Caco-2 (cell line): ENCODE measurements at regions of chr19 and their contacts with region 1.

Region 1: DNA sequence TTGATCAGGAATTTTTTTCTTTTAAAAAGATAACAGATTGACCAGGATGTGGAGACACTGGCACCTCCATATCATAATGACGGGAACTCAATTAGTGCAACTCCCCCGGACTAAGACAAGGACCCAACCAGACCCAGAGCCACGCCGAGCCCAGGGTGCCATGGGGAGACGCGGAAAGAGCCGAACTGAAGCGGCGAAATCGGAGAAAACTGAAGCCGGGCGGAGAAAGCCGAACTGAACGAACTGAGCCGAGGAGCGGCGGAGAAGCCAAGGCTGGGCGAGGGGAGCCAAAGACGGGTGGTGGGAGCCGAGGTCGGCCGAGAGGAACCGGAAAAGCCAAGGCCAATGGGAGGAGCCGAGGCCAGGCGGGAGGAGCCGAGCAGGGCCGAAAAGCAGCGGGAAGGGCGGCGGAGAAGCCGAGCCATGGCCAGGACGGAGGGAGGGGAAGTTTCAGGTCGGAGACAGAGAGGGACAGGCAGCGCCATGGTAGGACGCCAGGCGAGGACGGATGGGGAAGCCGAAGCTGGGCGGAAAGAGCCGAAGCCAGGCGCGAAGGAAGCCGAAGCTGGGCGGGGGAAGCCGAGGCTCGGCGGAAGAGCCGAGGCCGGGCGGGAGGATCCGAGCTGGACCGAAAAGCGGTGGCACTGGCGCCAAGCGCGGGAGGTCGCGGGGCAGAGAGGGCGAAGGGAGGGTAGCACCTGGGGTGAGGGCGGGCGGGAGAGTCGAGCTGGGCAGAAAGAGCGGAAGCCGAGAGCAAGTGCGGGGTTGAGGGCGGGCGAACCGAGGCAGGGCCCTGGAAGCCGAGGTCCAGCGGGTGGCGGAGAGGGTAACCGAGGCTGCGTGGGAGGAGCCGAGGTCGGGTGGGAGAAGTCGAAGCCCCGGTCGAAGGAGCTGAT is 29.4 kb downstream of the ZNF557 start:
- DNase-seq: peak; percentile 94
- H3K4me3 ChIP-seq: peak overlapping the region; percentile 82
- H3K4me3 Mint-ChIP-seq: peak overlapping the region; percentile 97
- H3K27ac Mint-ChIP-seq: peak overlapping the region; percentile 98
- H3K4me1 ChIP-seq: peaks cover 23% of the 10 kb centered on the region
- H3K4me1 Mint-ChIP-seq: peaks cover 12% of the 10 kb centered on the region
- H3K27me3 ChIP-seq: no peaks in the 10 kb centered on the region
- H3K27me3 Mint-ChIP-seq: no peaks in the 10 kb centered on the region
- CTCF ChIP-seq: no peak

Region 2: GRCh38 chr19:7004313-7004931 is 94.5 kb before region 1 on chr19:
- CTCF ChIA-PET with region 1: no interaction called
- POLR2A ChIA-PET with region 1: no interaction called
- intact Hi-C with region 1: no loop called
- DNase-seq: no peak
- H3K4me3 ChIP-seq: no peak overlapping the region
- H3K4me3 Mint-ChIP-seq: no peak overlapping the region
- H3K27ac Mint-ChIP-seq: no peak overlapping the region
- H3K4me1 ChIP-seq: no peaks in the 10 kb centered on the region
- H3K4me1 Mint-ChIP-seq: no peaks in the 10 kb centered on the region
- H3K27me3 ChIP-seq: no peaks in the 10 kb centered on the region
- H3K27me3 Mint-ChIP-seq: peaks cover 3% of the 10 kb centered on the region
- CTCF ChIP-seq: no peak

Region 3: DNA sequence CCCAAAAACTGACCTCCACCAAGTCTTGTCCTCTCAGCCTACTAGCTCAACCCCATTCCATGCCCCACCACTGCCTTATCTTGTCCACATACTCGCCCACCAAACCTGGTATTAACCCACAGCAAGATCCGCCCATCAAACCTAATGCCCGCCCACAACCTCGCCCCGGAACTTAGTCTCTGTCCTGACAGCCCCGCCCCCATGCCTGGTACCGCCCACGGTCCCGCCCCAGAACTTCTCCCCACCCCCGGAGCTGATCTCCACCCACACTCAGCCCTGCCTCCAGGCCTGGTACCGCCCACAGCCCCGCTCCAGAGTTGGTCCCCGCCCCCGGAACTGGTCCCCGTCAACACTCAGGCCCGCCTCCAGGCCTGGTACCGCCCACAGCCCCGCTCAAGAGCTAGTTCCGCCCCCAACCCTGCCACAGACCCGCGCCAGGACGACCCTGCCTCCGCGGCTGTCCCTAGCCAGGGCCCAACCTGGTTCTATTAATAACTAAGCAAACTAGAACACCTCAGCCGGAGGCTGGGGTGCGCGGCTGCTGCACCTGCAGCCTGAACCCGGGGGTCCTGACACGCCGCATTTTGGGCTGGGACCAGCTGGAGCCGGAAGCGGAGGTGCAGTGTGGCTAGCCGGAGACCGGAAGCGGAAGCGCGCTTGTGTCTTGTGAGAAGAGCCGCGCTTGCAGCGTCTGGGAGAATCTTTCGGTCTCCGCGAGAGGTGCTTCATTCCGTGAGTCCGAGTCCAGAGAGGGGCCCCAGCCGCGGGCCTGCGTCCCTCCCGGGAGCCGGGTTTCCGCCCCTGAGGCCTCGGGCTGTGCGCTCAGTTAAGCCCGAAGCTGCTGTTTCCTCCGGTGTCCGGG is 29.7 kb before region 1 on chr19 and contains the start of gene ZNF557:
- CTCF ChIA-PET with region 1: interaction called, 4 read pairs
- POLR2A ChIA-PET with region 1: interaction called, 28 read pairs
- intact Hi-C with region 1: no loop called
- DNase-seq: peak; percentile 97 to 98
- H3K4me3 ChIP-seq: peak within 1 kb of the TSS; percentile 80
- H3K4me3 Mint-ChIP-seq: peak within 1 kb of the TSS; percentile 72
- H3K27ac Mint-ChIP-seq: peak within 1 kb of the TSS; percentile 70
- H3K4me1 ChIP-seq: no peaks in the 10 kb centered on the region
- H3K4me1 Mint-ChIP-seq: peaks cover 7% of the 10 kb centered on the region
- H3K27me3 ChIP-seq: no peaks in the 10 kb centered on the region
- H3K27me3 Mint-ChIP-seq: no peaks in the 10 kb centered on the region
- CTCF ChIP-seq: no peak
- total RNA-seq, gene ZNF557: 8.3 and 8.8 TPM in 2 replicates

Region 4: DNA sequence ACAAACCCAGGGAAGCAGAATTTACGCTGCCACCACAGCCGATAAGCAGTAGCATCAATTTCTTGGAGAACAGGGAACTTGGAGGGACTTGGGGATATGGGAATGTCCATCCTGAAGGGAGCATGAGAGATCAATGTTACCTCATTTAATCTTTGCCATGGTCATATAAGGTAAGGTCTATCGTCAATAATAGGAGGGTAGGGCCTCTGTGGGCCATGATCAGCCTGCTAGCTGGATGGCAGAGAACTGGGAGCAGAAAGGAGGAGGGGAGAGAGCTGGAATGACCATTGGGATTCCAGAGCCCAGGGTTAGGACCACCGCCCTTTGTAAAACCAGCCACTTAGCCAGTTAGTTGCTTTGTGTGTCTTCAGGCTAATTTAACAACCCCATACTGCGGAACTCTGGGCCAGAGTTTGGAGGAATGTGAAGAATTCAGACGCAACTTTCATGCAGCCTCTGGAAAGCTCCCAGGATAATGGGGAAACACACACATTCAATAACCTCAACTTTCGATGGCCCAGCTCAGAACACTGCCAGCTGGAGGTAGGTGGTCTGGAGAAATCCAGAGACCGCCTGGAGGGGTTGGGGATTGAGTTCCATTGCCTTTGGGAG is 10.8 kb after region 1 on chr19:
- CTCF ChIA-PET with region 1: no interaction called
- POLR2A ChIA-PET with region 1: no interaction called
- intact Hi-C with region 1: no loop called
- DNase-seq: peak; percentile 30 to 40
- H3K4me3 ChIP-seq: no peak overlapping the region
- H3K4me3 Mint-ChIP-seq: no peak overlapping the region
- H3K27ac Mint-ChIP-seq: no peak overlapping the region
- H3K4me1 ChIP-seq: peaks cover 4% of the 10 kb centered on the region; the same call in 1 of the 2 replicates
- H3K4me1 Mint-ChIP-seq: no peaks in the 10 kb centered on the region
- H3K27me3 ChIP-seq: no peaks in the 10 kb centered on the region
- H3K27me3 Mint-ChIP-seq: no peaks in the 10 kb centered on the region
- CTCF ChIP-seq: no peak

Region 5: GRCh38 chr19:7149956-7150705 is 51.2 kb after region 1 on chr19:
- CTCF ChIA-PET with region 1: interaction called, 3 read pairs
- POLR2A ChIA-PET with region 1: no interaction called
- intact Hi-C with region 1: loop called (anchors 2 kb)
- DNase-seq: no peak
- H3K4me3 ChIP-seq: no peak overlapping the region
- H3K4me3 Mint-ChIP-seq: no peak overlapping the region
- H3K27ac Mint-ChIP-seq: no peak overlapping the region
- H3K4me1 ChIP-seq: no peaks in the 10 kb centered on the region
- H3K4me1 Mint-ChIP-seq: peaks cover 7% of the 10 kb centered on the region
- H3K27me3 ChIP-seq: no peaks in the 10 kb centered on the region
- H3K27me3 Mint-ChIP-seq: no peaks in the 10 kb centered on the region
- CTCF ChIP-seq: no peak

Region 6: DNA sequence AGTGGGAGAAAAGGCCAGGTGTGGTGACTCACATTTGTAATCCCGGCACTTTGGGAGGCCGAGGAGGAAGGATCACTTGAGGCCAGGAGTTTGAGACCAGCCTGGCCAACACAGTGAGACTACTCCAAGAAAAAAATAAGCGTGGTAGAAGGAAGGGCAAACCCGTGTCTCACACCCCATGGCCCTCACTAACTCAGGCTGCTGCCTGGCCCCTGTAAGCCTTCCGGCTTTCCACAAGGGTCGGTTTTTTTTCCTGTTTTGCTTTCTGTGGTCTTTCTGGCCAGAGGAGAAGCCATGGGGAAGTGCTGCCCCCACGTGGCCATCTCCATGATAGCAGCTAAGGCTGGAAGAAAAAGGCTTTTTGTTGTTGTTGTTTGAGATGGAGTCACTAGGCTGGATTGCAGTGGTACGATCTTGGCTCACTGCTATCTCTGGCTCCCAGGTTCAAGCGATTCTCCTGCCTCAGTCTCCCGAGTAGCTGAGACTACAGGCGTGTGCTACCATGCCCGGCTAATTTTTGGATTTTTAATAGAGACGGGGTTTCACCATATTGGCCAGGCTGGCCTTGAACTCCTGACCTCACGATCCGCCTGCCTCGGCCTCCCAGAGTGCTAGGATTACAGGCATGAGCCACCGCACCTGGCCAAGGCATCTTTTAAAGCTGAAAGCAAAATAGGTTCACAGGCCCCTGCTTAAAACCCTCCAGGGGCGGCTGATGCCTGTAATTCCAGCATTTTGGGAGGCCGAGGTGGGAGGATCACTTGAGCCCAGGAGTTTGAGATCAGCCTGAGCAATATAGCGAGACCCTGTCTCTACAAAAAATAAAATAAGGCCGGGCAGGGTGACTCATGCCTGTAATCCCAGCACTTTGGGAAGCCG is 242.2 kb after region 1 on chr19:
- CTCF ChIA-PET with region 1: interaction called, 15 read pairs
- POLR2A ChIA-PET with region 1: no interaction called
- intact Hi-C with region 1: loop called (anchors 1 kb)
- DNase-seq: peak; percentile 77 to 88
- H3K4me3 ChIP-seq: no peak overlapping the region
- H3K4me3 Mint-ChIP-seq: no peak overlapping the region
- H3K27ac Mint-ChIP-seq: no peak overlapping the region
- H3K4me1 ChIP-seq: no peaks in the 10 kb centered on the region; the same call in 1 of the 2 replicates
- H3K4me1 Mint-ChIP-seq: no peaks in the 10 kb centered on the region
- H3K27me3 ChIP-seq: no peaks in the 10 kb centered on the region
- H3K27me3 Mint-ChIP-seq: no peaks in the 10 kb centered on the region
- CTCF ChIP-seq: peak; percentile 87 to 94